Spleen (tissue), 13 donors: ENCODE measurements at regions of chr19 and their contacts with region 1.

Region 1: DNA sequence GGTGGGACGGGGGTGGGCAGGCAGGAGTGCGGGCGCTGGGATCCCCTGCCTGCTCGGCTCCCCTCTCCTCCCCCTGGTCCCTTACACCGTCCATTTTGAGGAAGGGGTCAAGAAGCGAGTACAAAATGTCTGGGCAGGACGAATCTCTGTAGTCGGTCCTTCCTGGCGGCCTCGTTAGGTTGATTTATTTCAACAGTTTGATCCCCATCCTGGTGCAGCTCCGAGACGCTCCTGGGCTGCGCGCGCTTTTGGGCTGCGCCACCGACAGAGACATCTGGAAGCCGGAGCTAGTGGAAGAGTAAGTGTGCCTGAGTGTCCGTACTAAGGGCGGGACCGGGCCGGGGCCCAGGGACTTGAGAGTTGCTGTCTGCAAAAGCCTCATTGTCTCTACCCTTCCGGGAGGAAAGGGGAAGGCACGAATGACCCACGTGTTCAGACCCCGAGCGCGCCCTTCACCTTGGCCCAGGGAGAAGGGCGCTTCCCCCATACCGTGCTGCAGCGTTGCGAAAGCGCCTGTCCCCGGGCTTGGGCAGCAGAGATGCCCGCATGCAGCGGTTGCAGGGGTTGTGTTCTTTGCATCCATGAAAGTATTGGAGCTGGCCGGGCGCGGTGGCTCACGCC is 1.8 kb downstream of the ZNF114 start:
- DNase-seq: peak; percentile 85
- H3K4me3 ChIP-seq: peak overlapping the region; percentile 42 to 81 (median 54)
- H3K27ac ChIP-seq: peak overlapping the region; percentile 21 to 83 (median 73)
- H3K4me1 ChIP-seq: peaks cover 9 to 31% (median 25%) of the 10 kb centered on the region in 6 donors
- H3K27me3 ChIP-seq: peaks cover 0 to 23% (median 0%) of the 10 kb centered on the region in 7 donors
- CTCF ChIP-seq: no peak
- POLR2A ChIP-seq: no peak

Region 2: DNA sequence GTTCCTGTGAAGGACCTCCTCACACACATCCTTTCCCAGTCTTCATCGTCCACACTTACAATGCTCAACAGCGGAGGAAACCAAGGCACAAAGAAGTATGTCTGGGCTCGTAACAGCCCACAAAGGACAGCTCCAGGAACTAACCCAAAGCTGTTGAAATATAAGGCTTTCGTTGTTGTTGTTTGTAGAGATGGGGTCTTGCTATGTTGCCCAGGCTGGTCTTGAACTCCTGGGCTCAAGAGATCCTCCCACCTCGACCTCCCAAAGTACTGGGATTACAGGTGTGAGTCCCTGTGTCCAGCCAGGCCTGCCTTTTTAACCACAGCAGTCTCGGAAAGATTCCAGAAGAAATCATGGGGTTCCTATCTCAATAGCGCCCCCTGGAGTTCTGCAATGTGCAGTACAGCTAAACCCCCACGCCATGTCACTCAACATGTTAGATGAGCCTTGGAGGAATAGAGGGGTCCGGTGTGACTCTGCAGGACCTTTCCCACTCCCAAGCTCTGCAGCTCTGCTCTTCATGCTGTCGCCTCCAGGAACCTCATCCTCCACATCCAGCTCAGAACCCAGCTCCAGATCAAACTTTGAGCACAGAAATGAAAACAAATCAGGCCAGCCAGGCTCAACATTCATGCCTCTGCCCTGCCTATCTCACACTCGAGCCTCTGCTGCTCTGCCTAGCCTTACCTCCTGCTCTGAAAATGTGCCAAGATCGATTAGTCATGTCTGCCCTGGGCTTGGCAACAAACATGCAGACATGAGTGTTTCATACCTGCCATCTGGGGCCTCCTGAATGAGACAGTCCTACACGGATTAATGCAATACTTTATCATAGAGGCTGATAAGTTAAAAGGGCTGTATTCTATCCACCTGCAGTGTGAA is 168.5 kb before region 1 on chr19:
- intact Hi-C with region 1: no loop called
- DNase-seq: no peak
- H3K4me3 ChIP-seq: no peak overlapping the region
- H3K27ac ChIP-seq: no peak overlapping the region
- H3K4me1 ChIP-seq: peaks cover 8 to 14% (median 12%) of the 10 kb centered on the region in 6 donors
- H3K27me3 ChIP-seq: no peaks in the 10 kb centered on the region
- CTCF ChIP-seq: peak in 10 of 11 experiments; percentile 33 to 77 (median 58)
- POLR2A ChIP-seq: no peak

Region 3: GRCh38 chr19:48290771-48291488 is 19.3 kb after region 1 on chr19:
- intact Hi-C with region 1: loop called (anchors 2 kb)
- DNase-seq: peak; percentile 91
- H3K4me3 ChIP-seq: peak overlapping the region; percentile 12 to 68 (median 33)
- H3K27ac ChIP-seq: no peak overlapping the region
- H3K4me1 ChIP-seq: peaks cover 9 to 17% (median 13%) of the 10 kb centered on the region in 6 donors
- H3K27me3 ChIP-seq: peaks cover 0 to 37% (median 0%) of the 10 kb centered on the region in 7 donors
- CTCF ChIP-seq: peak; percentile 84 to 99 (median 93)
- POLR2A ChIP-seq: no peak

Region 4: DNA sequence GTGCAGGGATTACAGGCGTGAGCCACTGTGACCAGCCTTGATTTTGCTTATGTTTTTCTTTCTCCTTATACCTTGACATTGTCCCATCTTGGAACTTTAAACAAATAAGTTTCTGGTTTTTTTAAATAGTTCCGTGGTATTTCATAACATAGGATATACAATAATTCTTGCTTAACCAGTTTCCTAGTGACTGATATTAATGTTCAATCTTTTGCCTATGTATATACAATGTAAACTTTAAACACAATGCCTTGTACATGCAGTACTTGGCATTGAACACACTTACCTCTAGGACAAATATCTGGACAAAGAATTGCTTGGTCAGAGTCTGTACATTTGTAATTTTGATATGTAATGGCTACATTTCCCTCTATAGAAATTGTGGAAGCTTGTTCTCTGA is 310.5 kb after region 1 on chr19:
- intact Hi-C with region 1: loop called (anchors 5 kb)
- DNase-seq: no peak
- H3K4me3 ChIP-seq: no peak overlapping the region
- H3K27ac ChIP-seq: no peak overlapping the region
- H3K4me1 ChIP-seq: peaks cover 0 to 11% (median 5%) of the 10 kb centered on the region in 6 donors
- H3K27me3 ChIP-seq: peaks cover 0 to 14% (median 0%) of the 10 kb centered on the region in 7 donors
- CTCF ChIP-seq: no peak
- POLR2A ChIP-seq: no peak